B cell (primary cell): ENCODE measurements at regions of chr3 and their contacts with region 1.

Region 1: DNA sequence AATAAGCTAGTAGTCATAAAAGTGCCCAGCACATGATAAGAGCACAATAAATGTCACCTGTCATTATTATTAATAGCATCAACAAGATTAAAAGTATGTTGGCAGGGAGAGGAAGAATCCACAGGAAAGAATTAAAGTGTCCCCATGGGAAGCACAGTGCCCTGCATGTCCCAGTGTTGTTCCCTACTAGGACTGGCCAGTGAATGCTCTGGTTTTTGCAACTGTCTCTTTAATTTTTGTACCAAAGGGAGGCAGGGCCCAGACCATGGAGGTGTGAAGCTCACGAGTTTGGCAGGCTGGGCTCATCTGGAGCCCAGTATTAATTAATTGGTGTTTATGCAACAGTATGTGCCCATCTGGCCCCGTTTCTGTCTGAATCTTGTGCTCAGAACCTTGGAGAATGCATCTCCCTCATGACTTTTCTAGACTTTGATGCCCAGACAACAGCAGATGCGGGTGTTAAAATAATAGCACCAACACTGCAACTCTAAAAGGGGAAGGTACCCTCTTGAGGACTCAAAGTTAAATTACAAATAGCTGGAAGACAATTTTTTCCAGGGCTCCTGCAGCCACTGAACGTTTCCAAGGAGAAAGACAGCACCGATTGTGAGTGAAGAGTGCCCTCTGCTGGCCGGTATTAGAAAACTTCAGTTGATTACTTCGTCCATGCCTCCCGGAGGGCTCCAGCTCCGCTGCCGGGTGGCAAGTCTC is 71.9 kb upstream of the SPATA12 start:
- DNase-seq: peak; percentile 80
- ATAC-seq: peak; percentile 74
- H3K4me3 ChIP-seq: no peak overlapping the region
- H3K4me3 Mint-ChIP-seq: no peak overlapping the region
- H3K27ac ChIP-seq: no peak overlapping the region
- H3K27ac Mint-ChIP-seq: no peak overlapping the region
- H3K4me1 ChIP-seq: no peaks in the 10 kb centered on the region
- H3K4me1 Mint-ChIP-seq: no peaks in the 10 kb centered on the region
- H3K27me3 ChIP-seq: peaks cover 0 to 11% (median 4%) of the 10 kb centered on the region in 4 experiments
- H3K27me3 Mint-ChIP-seq: peaks cover 23% of the 10 kb centered on the region
- CTCF ChIP-seq: peak; percentile 99

Region 2: DNA sequence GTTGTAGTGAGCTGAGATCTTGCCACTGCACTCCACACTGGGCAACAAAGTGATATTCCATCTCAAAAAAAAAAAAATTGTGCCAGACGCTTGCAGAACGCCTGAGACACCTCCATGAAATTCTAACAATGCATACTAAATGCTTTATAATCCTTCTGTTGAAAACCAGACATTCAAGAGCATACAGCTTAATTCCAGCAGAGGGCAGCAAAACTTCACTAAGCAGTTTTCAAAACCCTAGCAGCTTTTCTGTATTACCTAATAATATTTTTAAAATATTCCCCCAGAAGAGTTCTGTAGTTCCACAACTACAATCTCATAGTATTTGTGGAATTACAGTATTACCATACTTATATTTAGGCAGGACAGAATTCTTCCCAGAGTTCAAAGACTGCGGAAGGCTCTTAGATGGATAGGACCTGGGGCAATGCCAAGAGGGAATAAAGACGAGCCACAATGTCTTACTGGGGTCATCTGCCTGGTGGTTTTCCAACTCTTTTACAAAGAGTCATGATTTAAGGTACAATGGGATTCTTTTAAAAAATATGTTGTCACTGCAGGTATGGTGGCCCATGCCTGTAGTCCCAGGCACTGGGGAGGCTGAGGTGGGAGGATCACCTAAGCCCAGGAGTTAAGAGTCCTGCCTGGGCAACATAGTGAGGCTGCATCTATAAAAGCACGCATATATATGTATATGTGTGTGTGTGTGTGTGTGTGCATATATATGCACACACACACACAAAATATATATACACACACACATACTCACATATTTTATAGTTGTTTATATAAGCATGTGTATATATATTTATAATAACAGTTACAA is 285.9 kb before region 1 on chr3:
- CTCF ChIA-PET with region 1: interaction called, 310 read pairs
- POLR2A ChIA-PET with region 1: interaction called, 8 read pairs
- intact Hi-C with region 1: no loop called
- DNase-seq: peak; percentile 81
- ATAC-seq: peak; percentile 64
- H3K4me3 ChIP-seq: no peak overlapping the region
- H3K4me3 Mint-ChIP-seq: no peak overlapping the region
- H3K27ac ChIP-seq: no peak overlapping the region
- H3K27ac Mint-ChIP-seq: no peak overlapping the region
- H3K4me1 ChIP-seq: peaks cover 0 to 4% of the 10 kb centered on the region in 2 donors
- H3K4me1 Mint-ChIP-seq: peaks cover 3% of the 10 kb centered on the region
- H3K27me3 ChIP-seq: no peaks in the 10 kb centered on the region
- H3K27me3 Mint-ChIP-seq: no peaks in the 10 kb centered on the region
- CTCF ChIP-seq: peak; percentile 93

Region 3: GRCh38 chr3:56753206-56753820 is 235.3 kb before region 1 on chr3:
- CTCF ChIA-PET with region 1: interaction called, 42 read pairs
- POLR2A ChIA-PET with region 1: no interaction called
- intact Hi-C with region 1: no loop called
- DNase-seq: peak; percentile 5
- ATAC-seq: no peak
- H3K4me3 ChIP-seq: peak overlapping the region in 2 of 5 experiments; percentile 72 to 86
- H3K4me3 Mint-ChIP-seq: peak overlapping the region; percentile 95
- H3K27ac ChIP-seq: peak overlapping the region; percentile 85 to 87
- H3K27ac Mint-ChIP-seq: peak overlapping the region; percentile 95
- H3K4me1 ChIP-seq: peaks cover 41 to 53% of the 10 kb centered on the region in 2 donors
- H3K4me1 Mint-ChIP-seq: peaks cover 58% of the 10 kb centered on the region
- H3K27me3 ChIP-seq: no peaks in the 10 kb centered on the region
- H3K27me3 Mint-ChIP-seq: no peaks in the 10 kb centered on the region
- CTCF ChIP-seq: no peak

Region 4: GRCh38 chr3:56812754-56813650 is 175.6 kb before region 1 on chr3:
- CTCF ChIA-PET with region 1: interaction called, 16 read pairs
- POLR2A ChIA-PET with region 1: no interaction called
- intact Hi-C with region 1: no loop called
- DNase-seq: no peak
- ATAC-seq: no peak
- H3K4me3 ChIP-seq: no peak overlapping the region
- H3K4me3 Mint-ChIP-seq: no peak overlapping the region
- H3K27ac ChIP-seq: no peak overlapping the region
- H3K27ac Mint-ChIP-seq: no peak overlapping the region
- H3K4me1 ChIP-seq: no peaks in the 10 kb centered on the region
- H3K4me1 Mint-ChIP-seq: peaks cover 1% of the 10 kb centered on the region
- H3K27me3 ChIP-seq: no peaks in the 10 kb centered on the region
- H3K27me3 Mint-ChIP-seq: no peaks in the 10 kb centered on the region
- CTCF ChIP-seq: no peak

Region 5: GRCh38 chr3:56855856-56856512 is 132.6 kb before region 1 on chr3:
- CTCF ChIA-PET with region 1: interaction called, 28 read pairs
- POLR2A ChIA-PET with region 1: no interaction called
- intact Hi-C with region 1: loop called (anchors 1 kb)
- DNase-seq: peak; percentile 20
- ATAC-seq: no peak
- H3K4me3 ChIP-seq: no peak overlapping the region
- H3K4me3 Mint-ChIP-seq: no peak overlapping the region
- H3K27ac ChIP-seq: no peak overlapping the region
- H3K27ac Mint-ChIP-seq: no peak overlapping the region
- H3K4me1 ChIP-seq: no peaks in the 10 kb centered on the region
- H3K4me1 Mint-ChIP-seq: peaks cover 3% of the 10 kb centered on the region
- H3K27me3 ChIP-seq: no peaks in the 10 kb centered on the region
- H3K27me3 Mint-ChIP-seq: no peaks in the 10 kb centered on the region
- CTCF ChIP-seq: peak; percentile 55

Region 6: GRCh38 chr3:56862352-56863074 is 126.1 kb before region 1 on chr3:
- CTCF ChIA-PET with region 1: interaction called, 28 read pairs
- POLR2A ChIA-PET with region 1: no interaction called
- intact Hi-C with region 1: no loop called
- DNase-seq: no peak
- ATAC-seq: no peak
- H3K4me3 ChIP-seq: no peak overlapping the region
- H3K4me3 Mint-ChIP-seq: no peak overlapping the region
- H3K27ac ChIP-seq: no peak overlapping the region
- H3K27ac Mint-ChIP-seq: no peak overlapping the region
- H3K4me1 ChIP-seq: no peaks in the 10 kb centered on the region
- H3K4me1 Mint-ChIP-seq: no peaks in the 10 kb centered on the region
- H3K27me3 ChIP-seq: no peaks in the 10 kb centered on the region
- H3K27me3 Mint-ChIP-seq: no peaks in the 10 kb centered on the region
- CTCF ChIP-seq: no peak

Region 7: GRCh38 chr3:56915966-56916586 is 72.5 kb before region 1 on chr3:
- CTCF ChIA-PET with region 1: interaction called, 42 read pairs
- POLR2A ChIA-PET with region 1: no interaction called
- intact Hi-C with region 1: loop called (anchors 2 kb)
- DNase-seq: peak; percentile 70
- ATAC-seq: peak; percentile 69
- H3K4me3 ChIP-seq: peak overlapping the region; percentile 25 to 79 (median 57)
- H3K4me3 Mint-ChIP-seq: peak overlapping the region; percentile 85
- H3K27ac ChIP-seq: peak overlapping the region; percentile 69 to 85
- H3K27ac Mint-ChIP-seq: peak overlapping the region; percentile 70
- H3K4me1 ChIP-seq: peaks cover 43 to 44% of the 10 kb centered on the region in 2 donors
- H3K4me1 Mint-ChIP-seq: peaks cover 58% of the 10 kb centered on the region
- H3K27me3 ChIP-seq: no peaks in the 10 kb centered on the region
- H3K27me3 Mint-ChIP-seq: no peaks in the 10 kb centered on the region
- CTCF ChIP-seq: no peak

Region 8: DNA sequence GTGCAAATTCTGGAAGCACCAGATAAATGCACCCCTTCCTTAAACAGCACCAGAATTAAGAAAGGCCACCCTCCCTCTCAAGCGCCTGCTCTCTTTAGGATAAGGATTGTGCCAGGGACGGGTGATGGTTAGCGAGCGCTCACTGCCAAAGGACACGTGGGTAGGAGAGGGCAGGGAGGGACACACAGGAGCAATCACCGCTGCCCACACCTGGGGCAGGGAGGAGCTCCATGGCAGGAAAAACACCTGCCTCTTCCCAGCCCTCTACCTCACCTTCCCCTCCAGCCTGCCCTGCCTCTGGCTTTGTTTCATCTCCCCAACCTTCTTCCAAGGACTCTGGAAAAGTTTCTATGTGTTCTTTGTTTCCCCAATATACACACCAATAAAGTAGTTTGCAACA is 64.5 kb after region 1 on chr3:
- CTCF ChIA-PET with region 1: no interaction called
- POLR2A ChIA-PET with region 1: no interaction called
- intact Hi-C with region 1: no loop called
- DNase-seq: no peak
- ATAC-seq: no peak
- H3K4me3 ChIP-seq: no peak overlapping the region
- H3K4me3 Mint-ChIP-seq: no peak overlapping the region
- H3K27ac ChIP-seq: no peak overlapping the region
- H3K27ac Mint-ChIP-seq: no peak overlapping the region
- H3K4me1 ChIP-seq: no peaks in the 10 kb centered on the region
- H3K4me1 Mint-ChIP-seq: peaks cover 4% of the 10 kb centered on the region
- H3K27me3 ChIP-seq: peaks cover 0 to 3% (median 1%) of the 10 kb centered on the region in 4 experiments
- H3K27me3 Mint-ChIP-seq: peaks cover 35% of the 10 kb centered on the region
- CTCF ChIP-seq: no peak

Region 9: GRCh38 chr3:57402675-57403074 is 414.1 kb after region 1 on chr3:
- CTCF ChIA-PET with region 1: no interaction called
- POLR2A ChIA-PET with region 1: no interaction called
- intact Hi-C with region 1: no loop called
- DNase-seq: no peak
- ATAC-seq: no peak
- H3K4me3 ChIP-seq: no peak overlapping the region
- H3K4me3 Mint-ChIP-seq: no peak overlapping the region
- H3K27ac ChIP-seq: no peak overlapping the region
- H3K27ac Mint-ChIP-seq: no peak overlapping the region
- H3K4me1 ChIP-seq: peaks cover 2% of the 10 kb centered on the region in 2 donors
- H3K4me1 Mint-ChIP-seq: peaks cover 4% of the 10 kb centered on the region
- H3K27me3 ChIP-seq: no peaks in the 10 kb centered on the region
- H3K27me3 Mint-ChIP-seq: peaks cover 16% of the 10 kb centered on the region
- CTCF ChIP-seq: no peak